HepG2 (cell line): ENCODE measurements at regions of chr9 and their contacts with region 1.

Region 1: GRCh38 chr9:74431467-74431866 is 65.7 kb upstream of the RORB start:
- DNase-seq: no peak
- ATAC-seq: no peak
- H3K4me3 ChIP-seq: no peak overlapping the region
- H3K27ac ChIP-seq: no peak overlapping the region
- H3K4me1 ChIP-seq: no peaks in the 10 kb centered on the region
- H3K27me3 ChIP-seq: no peaks in the 10 kb centered on the region
- CTCF ChIP-seq: no peak
- EP300 ChIP-seq: no peak
- POLR2A ChIP-seq: no peak
- RAD21 ChIP-seq: no peak

Region 2: GRCh38 chr9:74414325-74414724 is 17.1 kb before region 1 on chr9:
- CTCF ChIA-PET with region 1: no interaction called
- POLR2A ChIA-PET with region 1: no interaction called
- in situ Hi-C with region 1: no loop called
- intact Hi-C with region 1: loop called (anchors 1 kb)
- DNase-seq: no peak
- ATAC-seq: no peak
- H3K4me3 ChIP-seq: no peak overlapping the region
- H3K27ac ChIP-seq: no peak overlapping the region
- H3K4me1 ChIP-seq: no peaks in the 10 kb centered on the region
- H3K27me3 ChIP-seq: no peaks in the 10 kb centered on the region
- CTCF ChIP-seq: no peak
- EP300 ChIP-seq: no peak
- POLR2A ChIP-seq: no peak
- RAD21 ChIP-seq: no peak